ENCODE measurements at regions of chr17 and their contacts with region 1.

Region 1: GRCh38 chr17:59753522-59754467 is 46.3 kb downstream of the VMP1 start:
- DNase-seq: no peak
- ATAC-seq: peak; percentile 90
- H3K4me3 Mint-ChIP-seq: no peak overlapping the region
- H3K27ac Mint-ChIP-seq: no peak overlapping the region
- H3K4me1 Mint-ChIP-seq: peaks cover 3% of the 10 kb centered on the region
- H3K27me3 Mint-ChIP-seq: no peaks in the 10 kb centered on the region
- CTCF ChIP-seq: peak; percentile 69

Region 2: DNA sequence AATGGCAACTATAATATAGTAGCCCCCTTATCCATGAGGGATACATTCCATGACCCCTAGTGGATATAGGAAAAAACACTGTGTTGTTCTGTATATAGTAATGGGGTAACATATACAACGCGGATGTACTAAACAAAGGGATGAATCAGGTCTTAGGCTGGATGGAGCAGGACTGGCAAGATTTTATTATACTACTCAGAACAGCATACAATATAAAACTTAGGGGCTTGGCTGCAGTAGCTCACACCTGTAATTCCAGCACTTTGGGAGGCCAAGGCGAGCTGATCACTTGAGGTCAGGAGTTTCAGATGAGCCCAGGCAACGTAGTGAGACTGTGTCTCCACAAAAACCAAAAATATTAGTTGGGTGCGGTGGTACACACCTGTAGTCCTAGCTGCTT is 19.6 kb before region 1 on chr17:
- CTCF ChIA-PET with region 1: no interaction called
- POLR2A ChIA-PET with region 1: no interaction called
- DNase-seq: no peak
- ATAC-seq: no peak
- H3K4me3 Mint-ChIP-seq: no peak overlapping the region
- H3K27ac Mint-ChIP-seq: no peak overlapping the region
- H3K4me1 Mint-ChIP-seq: no peaks in the 10 kb centered on the region
- H3K27me3 Mint-ChIP-seq: no peaks in the 10 kb centered on the region
- CTCF ChIP-seq: no peak

Region 3: GRCh38 chr17:59815965-59816364 is 62.2 kb after region 1 on chr17:
- CTCF ChIA-PET with region 1: no interaction called
- POLR2A ChIA-PET with region 1: no interaction called
- DNase-seq: no peak
- ATAC-seq: no peak
- H3K4me3 Mint-ChIP-seq: no peak overlapping the region
- H3K27ac Mint-ChIP-seq: no peak overlapping the region
- H3K4me1 Mint-ChIP-seq: no peaks in the 10 kb centered on the region
- H3K27me3 Mint-ChIP-seq: no peaks in the 10 kb centered on the region
- CTCF ChIP-seq: no peak

Region 4: GRCh38 chr17:59853168-59853918 is 99.5 kb after region 1 on chr17:
- CTCF ChIA-PET with region 1: interaction called, 24 read pairs
- POLR2A ChIA-PET with region 1: interaction called, 3 read pairs
- DNase-seq: peak; percentile 56
- ATAC-seq: peak; percentile 92
- H3K4me3 Mint-ChIP-seq: no peak overlapping the region
- H3K27ac Mint-ChIP-seq: peak overlapping the region; percentile 86
- H3K4me1 Mint-ChIP-seq: peaks cover 43% of the 10 kb centered on the region
- H3K27me3 Mint-ChIP-seq: no peaks in the 10 kb centered on the region; the same call in 1 of the 2 replicates
- CTCF ChIP-seq: no peak

Region 5: GRCh38 chr17:59870482-59870881 is 116.7 kb after region 1 on chr17:
- CTCF ChIA-PET with region 1: interaction called, 13 read pairs
- POLR2A ChIA-PET with region 1: no interaction called
- DNase-seq: no peak
- ATAC-seq: no peak
- H3K4me3 Mint-ChIP-seq: no peak overlapping the region
- H3K27ac Mint-ChIP-seq: peak overlapping the region; percentile 60; the same call in 1 of the 2 replicates
- H3K4me1 Mint-ChIP-seq: no peaks in the 10 kb centered on the region
- H3K27me3 Mint-ChIP-seq: no peaks in the 10 kb centered on the region
- CTCF ChIP-seq: no peak

Measured in WTC11 (cell line).